MCF 10A (cell line): ENCODE measurements at regions of chr19 and their contacts with region 1.

Region 1: DNA sequence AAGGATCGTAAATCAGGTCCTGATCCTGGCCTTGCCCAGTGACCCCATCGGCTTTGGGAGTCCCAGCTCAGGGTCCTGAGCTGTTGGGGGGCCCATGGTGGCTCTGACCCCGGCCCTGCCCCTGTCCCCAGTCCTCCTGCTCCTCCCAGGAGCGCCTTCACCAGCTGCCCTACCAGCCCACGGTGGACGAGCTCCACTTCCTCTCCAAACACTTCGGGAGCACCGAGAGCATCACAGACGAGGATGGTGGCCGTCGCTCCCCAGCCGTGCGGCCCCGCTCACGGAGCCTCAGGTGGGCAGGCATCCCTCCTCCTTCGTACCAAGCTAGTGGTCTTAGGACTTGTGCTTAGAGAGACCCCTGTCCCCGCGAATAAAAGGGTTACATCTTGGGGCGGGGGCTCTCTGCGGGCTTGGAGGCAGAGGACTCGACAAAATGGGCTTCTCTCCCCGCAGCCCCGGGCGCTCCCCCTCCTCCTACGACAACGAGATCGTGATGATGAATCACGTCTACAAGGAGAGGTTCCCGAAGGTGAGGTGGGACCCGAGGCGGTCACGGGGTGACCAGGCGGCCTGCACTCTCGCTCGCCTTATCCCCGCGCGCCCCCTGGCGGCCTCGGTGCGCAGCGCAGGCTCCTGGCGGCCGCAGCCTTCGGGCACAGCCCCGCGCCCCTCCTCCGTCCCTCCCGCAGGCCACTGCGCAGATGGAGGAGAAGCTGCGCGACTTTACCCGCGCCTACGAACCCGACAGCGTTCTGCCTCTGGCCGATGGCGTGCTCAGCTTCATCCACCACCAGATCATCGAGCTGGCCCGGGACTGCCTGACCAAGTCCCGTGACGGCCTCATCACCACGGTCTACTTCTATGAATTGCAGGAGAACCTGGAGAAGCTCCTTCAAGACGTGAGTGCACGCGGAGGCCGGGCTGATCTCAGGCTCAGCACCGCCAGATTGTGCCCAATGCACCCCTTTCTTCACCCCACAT is 9.1 kb downstream of the MAST1 start:
- DNase-seq: peak; percentile 85
- H3K4me3 Mint-ChIP-seq: peak overlapping the region; percentile 57
- H3K27ac Mint-ChIP-seq: no peak overlapping the region
- H3K4me1 Mint-ChIP-seq: peaks cover 5% of the 10 kb centered on the region
- H3K27me3 Mint-ChIP-seq: no peaks in the 10 kb centered on the region
- CTCF ChIP-seq: peak; percentile 99

Region 2: DNA sequence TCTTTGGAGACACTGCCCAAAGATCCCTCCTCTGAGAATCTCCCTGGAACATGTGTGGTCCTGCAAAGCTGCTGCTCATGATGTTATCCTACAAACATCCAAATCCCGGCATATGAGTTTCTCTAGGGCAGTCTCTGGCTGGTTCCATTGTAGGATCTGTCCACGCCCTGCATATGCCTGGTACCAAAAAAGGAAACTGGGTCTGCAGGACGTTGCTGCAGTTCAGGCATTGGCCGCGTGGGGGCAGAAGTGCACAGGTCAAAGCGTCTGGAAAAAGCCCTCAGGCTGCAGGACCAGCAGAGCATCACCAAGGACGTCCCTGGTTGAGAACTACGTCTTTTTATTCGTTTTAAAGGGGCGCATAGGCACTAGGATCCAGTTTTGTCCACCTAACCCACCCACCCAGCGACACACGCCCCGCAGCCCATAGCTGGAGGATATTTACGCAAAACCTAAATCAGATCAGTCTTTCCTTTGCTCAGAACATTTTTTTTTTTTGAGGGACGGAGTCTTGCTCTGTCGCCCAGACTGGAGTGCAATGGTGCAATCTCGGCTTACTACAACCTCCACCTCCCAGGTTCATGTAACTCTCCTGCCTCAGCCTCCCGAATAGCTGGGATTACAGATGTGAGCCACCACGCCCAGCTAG is 283.3 kb before region 1 on chr19:
- CTCF ChIA-PET with region 1: interaction called, 6 read pairs
- POLR2A ChIA-PET with region 1: no interaction called
- intact Hi-C with region 1: loop called (anchors 1 kb)
- DNase-seq: peak; percentile 86
- H3K4me3 Mint-ChIP-seq: no peak overlapping the region
- H3K27ac Mint-ChIP-seq: no peak overlapping the region
- H3K4me1 Mint-ChIP-seq: peaks cover 6% of the 10 kb centered on the region
- H3K27me3 Mint-ChIP-seq: no peaks in the 10 kb centered on the region
- CTCF ChIP-seq: peak; percentile 88

Region 3: DNA sequence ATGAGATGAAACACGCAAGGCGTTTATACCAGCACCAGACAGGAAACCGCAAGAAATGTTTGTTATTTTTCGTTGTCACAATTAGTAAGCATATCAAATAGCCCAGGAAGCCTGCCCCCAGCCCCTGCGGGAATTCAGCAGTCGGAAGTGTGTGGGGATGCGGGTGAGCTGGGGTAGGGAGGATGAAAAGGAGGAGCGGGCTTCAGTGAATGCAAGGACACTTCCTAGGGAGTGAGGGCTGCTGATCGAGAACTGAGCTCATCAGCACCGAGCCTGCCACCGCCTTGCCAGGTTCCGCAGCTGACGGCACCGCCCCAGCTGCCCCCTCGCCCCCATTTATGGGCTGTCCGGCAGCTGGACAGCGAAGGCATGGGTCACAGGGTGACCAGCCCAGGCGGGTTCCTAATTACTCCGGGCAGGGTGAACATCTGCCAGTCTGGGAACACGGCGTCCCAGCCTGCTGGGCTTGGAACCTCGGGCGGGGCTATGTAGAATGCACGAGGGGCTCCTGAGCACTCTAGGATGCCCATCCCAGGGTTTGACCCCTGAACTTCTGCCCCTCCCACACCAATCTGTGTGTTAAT is 97.4 kb before region 1 on chr19:
- CTCF ChIA-PET with region 1: interaction called, 10 read pairs
- POLR2A ChIA-PET with region 1: no interaction called
- intact Hi-C with region 1: no loop called
- DNase-seq: peak; percentile 42
- H3K4me3 Mint-ChIP-seq: peak overlapping the region; percentile 58
- H3K27ac Mint-ChIP-seq: peak overlapping the region; percentile 76
- H3K4me1 Mint-ChIP-seq: peaks cover 24% of the 10 kb centered on the region
- H3K27me3 Mint-ChIP-seq: no peaks in the 10 kb centered on the region
- CTCF ChIP-seq: no peak

Region 4: GRCh38 chr19:12766051-12766521 is 81.4 kb before region 1 on chr19:
- CTCF ChIA-PET with region 1: interaction called, 54 read pairs
- POLR2A ChIA-PET with region 1: interaction called, 6 read pairs
- intact Hi-C with region 1: no loop called
- DNase-seq: peak; percentile 77
- H3K4me3 Mint-ChIP-seq: peak overlapping the region; percentile 69
- H3K27ac Mint-ChIP-seq: no peak overlapping the region
- H3K4me1 Mint-ChIP-seq: peaks cover 5% of the 10 kb centered on the region
- H3K27me3 Mint-ChIP-seq: no peaks in the 10 kb centered on the region
- CTCF ChIP-seq: peak; percentile 67

Region 5: GRCh38 chr19:12789904-12790619 is 57.4 kb before region 1 on chr19:
- CTCF ChIA-PET with region 1: interaction called, 6 read pairs
- POLR2A ChIA-PET with region 1: interaction called, 17 read pairs
- intact Hi-C with region 1: no loop called
- DNase-seq: peak; percentile 98
- H3K4me3 Mint-ChIP-seq: peak overlapping the region; percentile 94
- H3K27ac Mint-ChIP-seq: peak overlapping the region; percentile 98
- H3K4me1 Mint-ChIP-seq: peaks cover 31% of the 10 kb centered on the region
- H3K27me3 Mint-ChIP-seq: no peaks in the 10 kb centered on the region
- CTCF ChIP-seq: no peak

Region 6: DNA sequence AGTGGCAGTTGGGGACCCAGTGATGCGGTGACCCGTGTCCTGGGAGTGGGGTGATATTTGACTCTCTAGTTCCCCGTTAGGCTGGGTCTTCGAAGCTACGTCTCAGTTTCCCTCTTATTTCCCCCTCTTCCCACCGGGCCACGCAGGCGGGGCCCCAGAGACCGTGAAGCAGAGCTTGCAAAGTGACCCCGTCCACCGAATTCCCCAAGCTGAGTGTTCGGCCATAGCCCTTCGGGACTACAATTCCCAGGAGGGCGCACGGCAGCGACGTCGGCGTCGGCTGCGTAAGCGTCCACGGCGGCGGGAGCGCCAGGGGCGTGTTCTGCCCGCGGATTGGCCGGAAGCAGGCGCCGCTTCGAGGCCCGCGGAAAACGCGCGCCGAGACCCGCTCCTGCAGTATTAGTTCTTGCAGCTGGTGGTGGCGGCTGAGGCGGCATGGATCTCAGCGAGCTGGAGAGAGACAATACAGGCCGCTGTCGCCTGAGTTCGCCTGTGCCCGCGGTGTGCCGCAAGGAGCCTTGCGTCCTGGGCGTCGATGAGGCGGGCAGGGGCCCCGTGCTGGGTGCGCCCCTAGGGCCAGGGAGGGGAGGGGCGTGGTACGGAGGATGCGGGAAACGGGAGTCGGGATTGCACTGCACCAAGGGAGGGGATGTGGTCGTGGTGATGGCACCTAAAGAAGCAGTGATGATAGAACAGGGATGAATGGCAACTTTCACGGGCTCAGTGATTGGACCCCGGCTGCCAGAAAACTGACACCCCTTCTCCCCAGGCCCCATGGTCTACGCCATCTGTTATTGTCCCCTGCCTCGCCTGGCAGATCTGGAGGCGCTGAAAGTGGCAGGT is 41.0 kb before region 1 on chr19 and contains the start of gene RNASEH2A:
- CTCF ChIA-PET with region 1: interaction called, 15 read pairs
- POLR2A ChIA-PET with region 1: interaction called, 5 read pairs
- intact Hi-C with region 1: no loop called
- DNase-seq: peak; percentile 89
- H3K4me3 Mint-ChIP-seq: peak within 1 kb of the TSS; percentile 94
- H3K27ac Mint-ChIP-seq: peak within 1 kb of the TSS; percentile 83
- H3K4me1 Mint-ChIP-seq: peaks cover 15% of the 10 kb centered on the region
- H3K27me3 Mint-ChIP-seq: no peaks in the 10 kb centered on the region
- CTCF ChIP-seq: no peak
- total RNA-seq, gene RNASEH2A: 11.2 and 16.7 TPM in 2 replicates

Region 7: DNA sequence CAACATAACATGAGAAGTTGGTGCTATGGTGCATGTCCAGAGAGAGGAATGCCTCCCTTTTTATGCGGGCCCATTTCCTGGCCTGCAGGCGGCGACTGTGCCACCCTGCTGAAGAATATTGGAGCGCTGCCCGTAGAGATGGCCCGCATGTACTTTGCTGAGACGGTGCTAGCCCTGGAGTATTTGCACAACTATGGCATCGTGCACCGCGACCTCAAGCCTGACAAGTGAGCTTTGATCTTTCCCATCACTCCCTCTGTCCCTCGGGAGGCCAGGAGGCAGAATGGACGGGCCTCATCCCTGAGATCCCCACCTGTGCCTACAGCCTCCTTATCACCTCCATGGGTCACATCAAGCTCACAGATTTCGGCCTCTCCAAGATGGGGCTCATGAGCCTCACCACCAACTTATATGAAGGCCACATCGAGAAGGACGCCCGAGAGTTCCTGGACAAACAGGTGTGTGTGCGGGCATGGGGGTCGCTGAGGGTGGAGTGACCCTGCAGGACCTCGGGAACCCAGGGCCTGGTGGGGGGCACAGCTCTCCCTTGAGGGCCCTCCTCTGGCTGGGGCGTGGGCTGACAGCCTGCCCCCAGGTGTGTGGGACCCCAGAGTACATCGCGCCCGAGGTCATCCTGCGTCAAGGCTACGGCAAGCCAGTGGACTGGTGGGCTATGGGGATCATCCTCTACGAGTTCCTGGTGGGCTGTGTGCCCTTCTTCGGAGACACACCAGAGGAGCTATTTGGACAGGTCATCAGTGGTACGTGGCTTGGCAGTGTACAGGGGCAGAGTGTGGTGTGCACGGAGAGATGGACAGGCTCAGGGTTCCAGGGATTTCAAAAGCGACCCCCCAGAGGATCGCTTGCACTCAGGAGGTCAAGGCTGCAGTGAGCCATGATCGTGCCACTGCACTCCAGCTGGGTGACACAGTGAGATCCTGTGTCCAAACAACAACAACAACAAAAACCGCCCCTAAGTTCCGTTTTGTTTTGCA is 17.6 kb after region 1 on chr19:
- CTCF ChIA-PET with region 1: interaction called, 33 read pairs
- POLR2A ChIA-PET with region 1: no interaction called
- intact Hi-C with region 1: no loop called
- DNase-seq: no peak
- H3K4me3 Mint-ChIP-seq: no peak overlapping the region
- H3K27ac Mint-ChIP-seq: no peak overlapping the region
- H3K4me1 Mint-ChIP-seq: no peaks in the 10 kb centered on the region
- H3K27me3 Mint-ChIP-seq: no peaks in the 10 kb centered on the region
- CTCF ChIP-seq: no peak